K562 (cell line): ENCODE measurements at regions of chr19 and their contacts with region 1.

Region 1: DNA sequence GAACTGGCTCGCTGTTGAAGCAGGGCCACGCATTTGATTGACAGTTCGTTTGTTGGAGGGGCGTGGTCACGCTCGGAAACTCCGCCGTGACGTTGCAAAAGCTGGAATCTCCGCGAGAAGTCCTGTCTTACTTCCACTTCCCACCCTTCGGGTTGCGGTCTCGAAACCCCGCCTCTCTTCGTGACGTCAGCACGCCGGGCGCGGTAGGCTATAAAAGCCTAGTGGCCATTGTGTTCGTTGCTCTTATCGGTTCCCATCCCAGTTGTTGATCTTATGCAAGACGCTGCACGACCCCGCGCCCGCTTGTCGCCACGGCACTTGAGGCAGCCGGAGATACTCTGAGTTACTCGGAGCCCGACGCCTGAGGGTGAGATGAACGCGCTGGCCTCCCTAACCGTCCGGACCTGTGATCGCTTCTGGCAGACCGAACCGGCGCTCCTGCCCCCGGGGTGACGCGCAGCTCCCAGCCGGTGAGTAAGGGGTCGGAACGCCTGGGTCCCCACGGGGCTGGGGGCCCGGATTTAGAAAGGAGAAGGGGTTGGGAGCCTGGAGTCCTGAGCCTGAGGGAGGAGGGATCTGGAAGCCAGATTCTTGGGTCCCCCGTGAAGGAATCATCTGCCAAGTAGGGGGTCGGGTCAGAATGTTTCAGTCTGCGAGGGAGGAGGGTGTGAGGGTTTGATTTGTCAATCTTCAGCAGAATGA is at the start of gene PPP1R15A:
- DNase-seq: peak; percentile 90 to 99 (median 93)
- ATAC-seq: peak; percentile 52
- H3K4me3 ChIP-seq: peak within 1 kb of the TSS; percentile 87
- H3K27ac ChIP-seq: peak within 1 kb of the TSS; percentile 94
- H3K4me1 ChIP-seq: peaks cover 23 to 42% of the 10 kb centered on the region in 2 experiments
- H3K27me3 ChIP-seq: no peaks in the 10 kb centered on the region
- CTCF ChIP-seq: no peak
- EP300 ChIP-seq: peak; percentile 77; the same call in 1 of the 2 replicates
- POLR2A ChIP-seq: peak; percentile 100
- RAD21 ChIP-seq: peak; percentile 27 to 41
- polyA plus RNA-seq, gene PPP1R15A: 0.42 to 1.3 TPM

Region 2: GRCh38 chr19:48738557-48739399 is 133.6 kb before region 1 on chr19:
- CTCF ChIA-PET with region 1: no interaction called
- POLR2A ChIA-PET with region 1: interaction called, 10 read pairs
- in situ Hi-C with region 1: no loop called
- intact Hi-C with region 1: no loop called
- DNase-seq: peak; percentile 97 to 99 (median 98)
- ATAC-seq: peak; percentile 86
- H3K4me3 ChIP-seq: peak overlapping the region; percentile 53
- H3K27ac ChIP-seq: peak overlapping the region; percentile 83
- H3K4me1 ChIP-seq: peaks cover 43 to 56% of the 10 kb centered on the region in 2 experiments
- H3K27me3 ChIP-seq: no peaks in the 10 kb centered on the region
- CTCF ChIP-seq: peak in 2 of 3 experiments; percentile 88 to 98; a peak in 5 of 6 replicates
- EP300 ChIP-seq: peak; percentile 29; the same call in 1 of the 2 replicates
- POLR2A ChIP-seq: peak; percentile 77
- RAD21 ChIP-seq: peak; percentile 81 to 91

Region 3: GRCh38 chr19:48853483-48853882 is 18.9 kb before region 1 on chr19:
- CTCF ChIA-PET with region 1: no interaction called
- POLR2A ChIA-PET with region 1: interaction called, 24 read pairs
- in situ Hi-C with region 1: no loop called
- intact Hi-C with region 1: no loop called
- DNase-seq: no peak
- ATAC-seq: no peak
- H3K4me3 ChIP-seq: no peak overlapping the region
- H3K27ac ChIP-seq: no peak overlapping the region
- H3K4me1 ChIP-seq: peaks cover 21 to 26% of the 10 kb centered on the region in 2 experiments
- H3K27me3 ChIP-seq: no peaks in the 10 kb centered on the region
- CTCF ChIP-seq: no peak
- EP300 ChIP-seq: no peak
- POLR2A ChIP-seq: no peak
- RAD21 ChIP-seq: no peak

Region 4: GRCh38 chr19:48887861-48888612 is 15.7 kb after region 1 on chr19:
- CTCF ChIA-PET with region 1: no interaction called
- POLR2A ChIA-PET with region 1: interaction called, 71 read pairs
- in situ Hi-C with region 1: no loop called
- intact Hi-C with region 1: no loop called
- DNase-seq: no peak
- ATAC-seq: peak; percentile 53
- H3K4me3 ChIP-seq: no peak overlapping the region
- H3K27ac ChIP-seq: no peak overlapping the region
- H3K4me1 ChIP-seq: peaks cover 34 to 57% of the 10 kb centered on the region in 2 experiments
- H3K27me3 ChIP-seq: no peaks in the 10 kb centered on the region
- CTCF ChIP-seq: no peak
- EP300 ChIP-seq: no peak
- POLR2A ChIP-seq: no peak
- RAD21 ChIP-seq: no peak

Region 5: GRCh38 chr19:48918801-48919247 is 46.5 kb after region 1 on chr19:
- CTCF ChIA-PET with region 1: no interaction called
- POLR2A ChIA-PET with region 1: interaction called, 32 read pairs
- in situ Hi-C with region 1: no loop called
- intact Hi-C with region 1: no loop called
- DNase-seq: peak; percentile 72 to 81 (median 78)
- ATAC-seq: peak; percentile 93
- H3K4me3 ChIP-seq: no peak overlapping the region
- H3K27ac ChIP-seq: no peak overlapping the region
- H3K4me1 ChIP-seq: peaks cover 0 to 13% of the 10 kb centered on the region in 2 experiments; a peak in 3 of 5 replicates
- H3K27me3 ChIP-seq: no peaks in the 10 kb centered on the region
- CTCF ChIP-seq: no peak
- EP300 ChIP-seq: 0 out of 2 replicates have a peak, but pooled peaks have one; percentile 26
- POLR2A ChIP-seq: no peak
- RAD21 ChIP-seq: no peak

Region 6: GRCh38 chr19:48993175-48994034 is 121.1 kb after region 1 on chr19 and contains the starts of genes GYS1 and RUVBL2:
- CTCF ChIA-PET with region 1: no interaction called
- POLR2A ChIA-PET with region 1: interaction called, 22 read pairs
- in situ Hi-C with region 1: no loop called
- intact Hi-C with region 1: no loop called
- DNase-seq: peak; percentile 98 to 100 (median 99)
- ATAC-seq: peak; percentile 95
- H3K4me3 ChIP-seq: peak within 1 kb of the TSS; percentile 87
- H3K27ac ChIP-seq: peak within 1 kb of the TSS; percentile 91
- H3K4me1 ChIP-seq: peaks cover 5 to 30% of the 10 kb centered on the region in 2 experiments; a peak in 4 of 5 replicates
- H3K27me3 ChIP-seq: no peaks in the 10 kb centered on the region
- CTCF ChIP-seq: peak; percentile 97 to 98 (median 98)
- EP300 ChIP-seq: peak; percentile 85
- POLR2A ChIP-seq: peak; percentile 96
- RAD21 ChIP-seq: peak; percentile 36 to 46
- polyA plus RNA-seq, gene GYS1: 1.9 to 2.2 TPM
- polyA plus RNA-seq, gene RUVBL2: 71.4 to 95.3 TPM

Region 7: DNA sequence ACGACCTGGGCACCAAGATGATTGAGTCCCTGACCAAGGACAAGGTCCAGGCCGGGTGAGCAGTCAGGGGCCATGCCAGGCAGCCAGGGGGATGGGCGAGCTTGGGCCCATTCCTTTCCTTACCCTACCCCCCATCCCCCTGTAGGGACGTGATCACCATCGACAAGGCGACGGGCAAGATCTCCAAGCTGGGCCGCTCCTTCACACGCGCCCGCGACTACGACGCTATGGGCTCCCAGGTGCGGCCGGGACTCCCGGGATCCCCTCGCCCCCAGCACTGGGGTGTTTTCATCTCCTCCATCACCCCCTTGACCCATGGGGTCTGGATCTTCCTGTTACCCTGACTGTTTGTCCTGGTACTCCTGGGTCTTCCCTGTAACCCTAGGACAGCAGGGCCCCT is 137.5 kb after region 1 on chr19:
- CTCF ChIA-PET with region 1: no interaction called
- POLR2A ChIA-PET with region 1: no interaction called
- in situ Hi-C with region 1: no loop called
- intact Hi-C with region 1: no loop called
- DNase-seq: no peak
- ATAC-seq: no peak
- H3K4me3 ChIP-seq: no peak overlapping the region
- H3K27ac ChIP-seq: no peak overlapping the region
- H3K4me1 ChIP-seq: peaks cover 0 to 12% of the 10 kb centered on the region in 2 experiments; a peak in 2 of 5 replicates
- H3K27me3 ChIP-seq: no peaks in the 10 kb centered on the region
- CTCF ChIP-seq: no peak
- EP300 ChIP-seq: no peak
- POLR2A ChIP-seq: 0 out of 2 replicates have a peak, but pooled peaks have one; percentile 30
- RAD21 ChIP-seq: no peak

Region 8: DNA sequence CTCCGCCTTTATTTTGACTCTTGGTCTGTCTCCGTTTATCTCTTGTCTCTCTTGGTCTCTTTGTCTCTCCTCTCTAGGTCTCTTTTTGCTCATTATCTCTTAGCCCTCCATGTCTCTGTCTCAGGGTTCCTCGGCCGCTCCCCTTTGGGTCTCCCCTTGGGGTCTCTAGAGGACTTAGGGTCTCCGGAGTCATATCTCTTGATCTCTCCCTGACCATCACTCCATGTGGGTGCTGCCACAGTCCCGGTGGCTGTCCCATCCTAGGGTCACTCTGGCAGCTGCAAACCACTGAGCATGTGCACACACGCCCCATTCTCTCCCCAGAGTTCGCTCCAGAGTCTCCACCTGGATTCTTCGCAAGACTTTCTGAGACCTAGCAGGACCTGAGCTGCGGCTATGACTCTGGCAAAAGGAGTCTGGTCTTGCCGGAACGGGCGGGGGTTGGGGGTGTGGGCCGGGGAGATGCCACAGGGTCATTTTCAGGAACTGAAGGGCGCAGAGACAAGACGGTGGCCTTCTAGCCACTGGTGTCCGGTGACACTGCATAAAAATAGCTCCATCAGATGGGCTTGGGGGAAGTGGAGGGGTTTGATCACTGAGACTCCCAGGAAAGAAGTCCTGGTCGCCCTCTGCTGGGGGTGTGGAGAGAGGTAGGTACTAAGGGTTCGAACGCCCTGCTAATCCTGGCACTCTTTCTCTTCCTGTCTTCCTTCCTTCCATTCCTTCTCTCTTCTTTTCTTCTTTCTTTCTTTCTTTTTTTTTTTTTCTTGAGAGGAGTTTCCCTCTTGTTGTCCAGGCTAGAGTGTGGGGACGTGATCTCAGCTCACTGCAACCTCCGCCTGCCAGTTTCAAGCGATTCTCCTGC is 201.4 kb after region 1 on chr19:
- CTCF ChIA-PET with region 1: no interaction called
- POLR2A ChIA-PET with region 1: no interaction called
- in situ Hi-C with region 1: no loop called
- intact Hi-C with region 1: no loop called
- DNase-seq: peak; percentile 76 to 91 (median 82)
- ATAC-seq: peak; percentile 95
- H3K4me3 ChIP-seq: no peak overlapping the region
- H3K27ac ChIP-seq: peak overlapping the region; percentile 52; the same call in 2 of the 3 replicates
- H3K4me1 ChIP-seq: peaks cover 9 to 32% of the 10 kb centered on the region in 2 experiments; a peak in 4 of 5 replicates
- H3K27me3 ChIP-seq: peaks cover 3 to 21% of the 10 kb centered on the region in 2 experiments; a peak in 4 of 5 replicates
- CTCF ChIP-seq: peak; percentile 71 to 84 (median 79)
- EP300 ChIP-seq: no peak
- POLR2A ChIP-seq: 0 out of 2 replicates have a peak, but pooled peaks have one; percentile 35
- RAD21 ChIP-seq: peak; percentile 41 to 70